Calu3 (cell line): ENCODE measurements at regions of chr2 and their contacts with region 1.

Region 1: DNA sequence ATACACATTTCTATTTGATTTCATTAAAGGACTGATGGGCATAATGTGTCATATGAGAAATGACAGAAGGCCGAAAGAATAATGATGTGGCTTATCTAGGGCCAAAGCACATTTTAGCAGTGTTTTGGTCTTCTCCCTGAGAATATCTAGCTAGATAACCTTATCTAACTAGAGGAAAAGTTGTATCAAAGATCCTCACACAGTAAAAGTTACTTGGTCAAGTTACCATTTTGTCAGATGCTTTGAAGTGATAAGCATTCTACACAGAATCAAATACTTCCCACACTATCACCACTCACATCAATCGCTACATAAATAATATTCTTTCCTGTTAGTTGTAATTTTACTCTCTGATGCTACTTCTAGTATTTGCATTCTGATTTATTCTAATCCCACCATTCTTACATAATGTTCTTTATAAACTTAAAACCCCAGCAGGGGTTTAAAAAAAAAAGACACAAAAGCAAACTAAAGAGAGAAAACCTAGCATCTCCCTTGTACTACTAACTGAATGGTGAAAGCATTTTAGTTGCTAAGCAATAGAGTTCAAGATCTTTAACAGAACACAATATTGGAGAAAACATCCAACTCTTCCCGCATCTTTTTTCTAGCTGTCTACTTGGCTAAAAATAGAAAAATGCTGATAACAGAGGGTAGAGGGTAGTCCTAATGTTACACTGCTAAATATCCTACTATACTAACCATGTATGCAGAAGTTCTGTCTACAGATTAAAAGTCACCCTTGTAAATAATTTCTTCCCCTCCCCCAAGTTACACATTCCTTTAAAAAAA is 8.0 kb downstream of the XPO1 start:
- DNase-seq: no peak
- H3K4me3 Mint-ChIP-seq: no peak overlapping the region
- H3K27ac Mint-ChIP-seq: no peak overlapping the region
- H3K4me1 Mint-ChIP-seq: no peaks in the 10 kb centered on the region
- H3K27me3 Mint-ChIP-seq: no peaks in the 10 kb centered on the region
- CTCF ChIP-seq: no peak

Region 2: DNA sequence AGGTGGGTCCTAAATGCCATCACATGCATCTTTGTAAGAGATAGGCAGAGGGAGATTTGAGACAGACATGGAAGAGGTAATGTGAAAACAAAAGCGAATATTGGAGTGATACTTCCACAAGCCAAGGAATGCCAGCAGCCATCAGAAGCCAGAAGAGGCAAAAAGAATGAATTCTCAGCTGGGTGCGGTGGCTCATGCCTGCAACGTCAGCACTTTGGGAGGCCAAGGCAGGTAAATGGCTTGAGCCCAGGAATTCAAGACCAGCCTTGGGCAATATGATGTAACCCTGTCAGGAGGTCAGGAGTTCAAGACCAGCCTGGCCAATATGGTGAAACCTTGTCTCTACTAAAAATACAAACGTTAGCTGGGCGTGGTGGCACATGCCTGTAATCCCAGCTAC is 268.9 kb after region 1 on chr2:
- CTCF ChIA-PET with region 1: interaction called, 12 read pairs
- intact Hi-C with region 1: no loop called
- DNase-seq: no peak
- H3K4me3 Mint-ChIP-seq: no peak overlapping the region
- H3K27ac Mint-ChIP-seq: no peak overlapping the region
- H3K4me1 Mint-ChIP-seq: peaks cover 7% of the 10 kb centered on the region
- H3K27me3 Mint-ChIP-seq: no peaks in the 10 kb centered on the region
- CTCF ChIP-seq: no peak